Activated CD4-positive, alpha-beta memory T cell treated with anti-CD3 and anti-CD28 coated beads for 36 hours (primary cell): ENCODE measurements at regions of chr6 and their contacts with region 1.

Region 1: GRCh38 chr6:137866914-137867684 is at the start of gene TNFAIP3:
- DNase-seq: peak; percentile 97
- H3K4me3 Mint-ChIP-seq: peak within 1 kb of the TSS; percentile 91
- H3K27ac Mint-ChIP-seq: peak within 1 kb of the TSS; percentile 93
- H3K4me1 Mint-ChIP-seq: peaks cover 32% of the 10 kb centered on the region
- H3K27me3 Mint-ChIP-seq: no peaks in the 10 kb centered on the region
- total RNA-seq, gene TNFAIP3: 259 to 267 TPM

Region 2: GRCh38 chr6:137661601-137662000 is 205.5 kb before region 1 on chr6:
- CTCF ChIA-PET with region 1: interaction called, 3 read pairs
- POLR2A ChIA-PET with region 1: interaction called, 6 read pairs
- intact Hi-C with region 1: loop called (anchors 2 kb)
- DNase-seq: peak; percentile 58
- H3K4me3 Mint-ChIP-seq: no peak overlapping the region
- H3K27ac Mint-ChIP-seq: no peak overlapping the region
- H3K4me1 Mint-ChIP-seq: peaks cover 24% of the 10 kb centered on the region
- H3K27me3 Mint-ChIP-seq: peaks cover 8% of the 10 kb centered on the region

Region 3: GRCh38 chr6:137717074-137718073 is 149.7 kb before region 1 on chr6:
- CTCF ChIA-PET with region 1: interaction called, 19 read pairs
- POLR2A ChIA-PET with region 1: interaction called, 32 read pairs
- intact Hi-C with region 1: no loop called
- DNase-seq: peak; percentile 90
- H3K4me3 Mint-ChIP-seq: no peak overlapping the region
- H3K27ac Mint-ChIP-seq: peak overlapping the region; percentile 69
- H3K4me1 Mint-ChIP-seq: peaks cover 47% of the 10 kb centered on the region
- H3K27me3 Mint-ChIP-seq: no peaks in the 10 kb centered on the region

Region 4: GRCh38 chr6:137811121-137811915 is 55.8 kb before region 1 on chr6:
- CTCF ChIA-PET with region 1: interaction called, 61 read pairs
- POLR2A ChIA-PET with region 1: interaction called, 11 read pairs
- intact Hi-C with region 1: no loop called
- DNase-seq: peak; percentile 90
- H3K4me3 Mint-ChIP-seq: peak overlapping the region; percentile 36
- H3K27ac Mint-ChIP-seq: peak overlapping the region; percentile 91
- H3K4me1 Mint-ChIP-seq: peaks cover 66% of the 10 kb centered on the region
- H3K27me3 Mint-ChIP-seq: no peaks in the 10 kb centered on the region

Region 5: DNA sequence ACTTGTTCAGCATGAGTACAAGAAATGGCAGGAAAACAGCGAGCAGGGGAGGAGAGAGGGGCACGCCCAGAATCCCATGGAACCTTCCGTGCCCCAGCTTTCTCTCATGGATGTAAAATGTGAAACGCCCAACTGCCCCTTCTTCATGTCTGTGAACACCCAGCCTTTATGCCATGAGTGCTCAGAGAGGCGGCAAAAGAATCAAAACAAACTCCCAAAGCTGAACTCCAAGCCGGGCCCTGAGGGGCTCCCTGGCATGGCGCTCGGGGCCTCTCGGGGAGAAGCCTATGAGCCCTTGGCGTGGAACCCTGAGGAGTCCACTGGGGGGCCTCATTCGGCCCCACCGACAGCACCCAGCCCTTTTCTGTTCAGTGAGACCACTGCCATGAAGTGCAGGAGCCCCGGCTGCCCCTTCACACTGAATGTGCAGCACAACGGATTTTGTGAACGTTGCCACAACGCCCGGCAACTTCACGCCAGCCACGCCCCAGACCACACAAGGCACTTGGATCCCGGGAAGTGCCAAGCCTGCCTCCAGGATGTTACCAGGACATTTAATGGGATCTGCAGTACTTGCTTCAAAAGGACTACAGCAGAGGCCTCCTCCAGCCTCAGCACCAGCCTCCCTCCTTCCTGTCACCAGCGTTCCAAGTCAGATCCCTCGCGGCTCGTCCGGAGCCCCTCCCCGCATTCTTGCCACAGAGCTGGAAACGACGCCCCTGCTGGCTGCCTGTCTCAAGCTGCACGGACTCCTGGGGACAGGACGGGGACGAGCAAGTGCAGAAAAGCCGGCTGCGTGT is 11.6 kb after region 1 on chr6:
- CTCF ChIA-PET with region 1: interaction called, 36 read pairs
- POLR2A ChIA-PET with region 1: interaction called, 49 read pairs
- intact Hi-C with region 1: no loop called
- DNase-seq: no peak
- H3K4me3 Mint-ChIP-seq: peak overlapping the region; percentile 51
- H3K27ac Mint-ChIP-seq: peak overlapping the region; percentile 84
- H3K4me1 Mint-ChIP-seq: peaks cover 89% of the 10 kb centered on the region
- H3K27me3 Mint-ChIP-seq: no peaks in the 10 kb centered on the region

Region 6: DNA sequence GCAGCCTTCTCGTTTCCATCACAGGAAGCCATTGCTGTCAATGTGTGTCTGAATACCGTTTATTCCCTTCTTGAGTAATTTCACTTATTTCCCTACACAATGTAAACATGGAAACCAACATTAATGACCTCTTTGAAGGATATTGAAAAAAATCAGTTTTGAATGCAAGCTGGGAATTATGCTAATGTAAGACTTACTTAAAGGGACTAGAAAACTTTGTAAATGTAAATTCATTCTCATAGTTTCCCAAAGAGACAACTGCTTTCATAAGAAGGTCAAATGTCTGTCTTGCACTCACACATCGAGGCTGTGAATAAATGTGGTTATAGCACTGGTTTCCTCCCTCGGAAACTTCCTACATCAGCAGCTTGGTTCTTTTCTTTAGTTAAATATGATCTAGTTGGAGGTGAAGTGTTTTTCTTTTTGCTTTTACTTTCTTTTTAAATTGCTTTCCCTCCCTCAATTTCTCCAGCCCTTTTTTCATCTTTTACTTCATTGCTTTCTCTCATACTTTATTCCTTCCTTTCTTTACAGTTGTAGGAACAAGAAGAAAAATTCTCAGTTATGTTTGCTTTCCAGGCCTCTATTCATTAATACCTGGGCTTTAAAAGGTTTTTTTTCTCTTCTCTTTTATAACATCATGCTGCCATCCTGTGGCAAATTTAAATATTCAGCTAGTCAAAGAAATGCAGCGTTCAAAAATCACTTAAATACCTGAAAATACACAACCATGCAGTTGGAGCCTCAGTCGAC is 108.3 kb after region 1 on chr6:
- CTCF ChIA-PET with region 1: interaction called, 72 read pairs
- POLR2A ChIA-PET with region 1: interaction called, 11 read pairs
- intact Hi-C with region 1: no loop called
- DNase-seq: peak; percentile 38
- H3K4me3 Mint-ChIP-seq: peak overlapping the region; percentile 64
- H3K27ac Mint-ChIP-seq: peak overlapping the region; percentile 84
- H3K4me1 Mint-ChIP-seq: peaks cover 59% of the 10 kb centered on the region
- H3K27me3 Mint-ChIP-seq: no peaks in the 10 kb centered on the region

Region 7: DNA sequence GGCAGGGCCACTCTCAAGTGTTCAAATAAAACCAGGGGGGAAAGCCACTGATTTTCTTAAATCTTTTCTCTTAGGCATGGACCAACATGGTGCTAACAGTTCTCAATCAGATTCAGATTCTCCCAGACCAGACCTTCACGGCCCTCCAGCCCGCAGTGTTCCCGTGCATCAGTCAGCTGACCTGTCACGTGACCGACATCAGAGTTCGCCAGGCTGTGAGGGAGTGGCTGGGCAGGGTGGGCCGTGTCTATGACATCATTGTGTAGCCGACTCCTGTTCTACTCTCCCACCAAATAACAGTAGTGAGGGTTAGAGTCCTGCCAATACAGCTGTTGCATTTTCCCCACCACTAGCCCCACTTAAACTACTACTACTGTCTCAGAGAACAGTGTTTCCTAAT is 469.1 kb after region 1 on chr6:
- CTCF ChIA-PET with region 1: no interaction called
- POLR2A ChIA-PET with region 1: no interaction called
- intact Hi-C with region 1: no loop called
- DNase-seq: no peak
- H3K4me3 Mint-ChIP-seq: no peak overlapping the region
- H3K27ac Mint-ChIP-seq: no peak overlapping the region
- H3K4me1 Mint-ChIP-seq: no peaks in the 10 kb centered on the region
- H3K27me3 Mint-ChIP-seq: peaks cover 11% of the 10 kb centered on the region